ENCODE measurements at regions of chr17 and their contacts with region 1.

Region 1: DNA sequence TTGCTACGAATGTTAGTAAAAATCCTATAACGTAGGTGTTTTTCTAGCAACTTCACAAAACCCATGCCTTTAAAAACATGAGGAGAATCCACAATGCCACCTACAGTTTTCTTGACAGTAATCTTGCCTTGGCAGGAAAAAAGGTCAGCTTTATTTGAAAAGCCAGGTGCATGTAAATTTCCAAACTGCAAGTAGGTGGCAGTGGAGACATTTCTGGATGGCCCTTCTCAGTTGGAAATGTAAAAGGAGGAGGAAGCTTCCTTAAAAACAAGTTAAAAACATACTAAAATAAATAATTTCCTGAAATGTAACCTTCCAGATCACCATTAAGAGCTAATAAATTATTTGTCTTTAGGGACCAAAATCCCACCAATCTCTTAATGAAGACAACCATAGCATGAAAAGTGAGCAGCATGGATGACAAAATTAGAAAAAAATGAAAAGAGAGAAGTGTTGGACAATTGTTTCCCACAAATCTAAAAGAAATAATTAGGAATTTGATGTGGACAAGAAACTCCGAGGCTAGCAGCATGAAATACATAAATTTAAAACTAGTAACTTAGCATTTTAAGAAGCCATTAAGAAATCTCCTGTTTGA is 152.2 kb downstream of the SNX11 start:
- DNase-seq: peak; percentile 35 to 87
- ATAC-seq: peak; percentile 52 to 59; a peak in 4 of 6 replicates
- H3K4me3 ChIP-seq: no peak overlapping the region
- H3K27ac ChIP-seq: peak overlapping the region in 1 of 2 experiments; percentile 35; a peak in 1 of 6 replicates
- H3K4me1 ChIP-seq: peaks cover 61% of the 10 kb centered on the region
- CTCF ChIP-seq: peak; percentile 99
- EP300 ChIP-seq: no peak
- POLR2A ChIP-seq: no peak
- RAD21 ChIP-seq: peak; percentile 93

Region 2: DNA sequence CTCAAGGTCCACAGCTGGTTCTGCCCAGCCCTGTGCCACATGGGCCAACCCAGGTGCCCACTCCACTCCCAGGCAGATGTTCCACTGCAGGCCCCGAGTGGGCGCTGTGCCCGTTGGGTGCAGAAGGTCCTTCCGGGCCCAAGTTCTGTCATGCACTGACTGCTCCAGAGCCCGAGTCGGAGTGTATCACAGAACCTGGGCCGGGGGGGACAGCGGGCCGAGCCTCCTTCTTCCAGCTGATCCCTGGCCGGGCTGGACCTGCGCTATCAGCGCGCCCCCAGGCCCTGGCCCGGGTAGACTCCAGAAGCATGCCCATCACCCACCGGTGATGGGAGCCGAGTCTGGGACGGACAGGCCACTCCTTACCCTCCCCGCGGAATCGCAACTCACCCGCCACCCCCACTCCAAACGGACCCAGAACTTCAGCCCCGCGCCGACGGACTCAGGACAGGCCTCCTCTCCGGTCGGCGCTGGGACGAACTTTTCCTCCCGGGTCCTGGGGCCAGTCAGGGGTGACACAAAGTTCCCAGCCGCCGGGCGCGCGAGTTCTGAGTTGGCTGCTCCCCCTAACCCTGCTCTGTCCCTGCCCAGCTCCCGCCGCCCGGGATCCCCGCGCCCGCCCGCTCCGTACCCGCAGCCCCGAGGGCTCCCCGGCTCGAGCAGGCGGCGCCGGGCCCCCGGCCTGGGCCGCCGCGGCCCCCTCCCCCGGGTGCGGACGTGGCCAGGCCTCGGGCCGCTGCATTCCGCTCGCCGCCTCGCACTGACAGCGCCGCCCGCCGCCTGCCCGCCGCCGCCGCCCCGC is 222.6 kb before region 1 on chr17 and contains the start of gene COPZ2:
- CTCF ChIA-PET with region 1: no interaction called
- POLR2A ChIA-PET with region 1: no interaction called
- DNase-seq: peak; percentile 71 to 85
- ATAC-seq: peak; percentile 94 to 95
- H3K4me3 ChIP-seq: peak within 1 kb of the TSS; percentile 63
- H3K27ac ChIP-seq: peak within 1 kb of the TSS; percentile 74 to 91
- H3K4me1 ChIP-seq: 0 out of 3 replicates have a peak, but pooled peaks cover 3% of the 10 kb centered on the region
- CTCF ChIP-seq: peak; percentile 70
- EP300 ChIP-seq: no peak
- POLR2A ChIP-seq: peak; percentile 28
- RAD21 ChIP-seq: 0 out of 5 replicates have a peak, but pooled peaks have one; percentile 17 to 36
- polyA plus RNA-seq, gene COPZ2: 19.1 and 19.3 TPM in 2 replicates

Region 3: DNA sequence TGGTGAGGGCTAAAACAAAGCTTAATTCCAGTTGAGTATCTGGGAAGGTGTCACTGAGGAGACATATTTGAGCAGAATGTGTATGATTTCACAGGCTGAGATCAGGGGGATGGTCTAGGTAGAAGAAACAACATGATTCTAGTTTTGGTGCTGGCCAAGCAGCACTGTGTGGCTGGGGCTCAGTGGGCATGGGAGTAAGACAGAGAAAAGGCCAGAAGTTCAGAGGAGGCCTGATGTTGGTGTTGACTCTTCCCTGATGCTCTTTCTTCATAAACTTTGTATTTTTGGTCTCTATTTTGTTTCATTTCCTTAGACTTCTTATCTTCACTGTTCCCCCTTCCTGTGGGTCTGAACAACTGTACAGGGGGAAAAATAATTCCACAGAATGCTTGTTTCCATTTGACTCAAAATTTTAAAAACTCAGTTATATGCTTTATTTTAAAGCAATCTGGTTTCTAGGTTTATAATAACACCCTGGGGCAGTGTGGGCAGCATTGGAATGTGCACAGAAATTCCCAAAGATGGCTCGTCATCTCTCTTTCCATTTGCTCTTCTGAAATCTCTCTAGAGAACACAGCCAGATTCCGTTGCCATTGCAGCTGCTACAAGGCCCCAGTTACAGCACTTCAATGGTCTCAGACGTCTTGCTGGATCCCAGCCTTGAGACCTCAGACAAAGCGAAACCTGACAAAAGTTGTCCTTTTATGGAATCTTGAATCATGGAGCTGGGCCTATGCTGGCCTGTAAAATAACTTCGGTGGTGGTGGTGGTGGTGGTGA is 83.9 kb before region 1 on chr17:
- CTCF ChIA-PET with region 1: interaction called, 11 read pairs
- POLR2A ChIA-PET with region 1: no interaction called
- DNase-seq: no peak
- ATAC-seq: no peak
- H3K4me3 ChIP-seq: no peak overlapping the region
- H3K27ac ChIP-seq: no peak overlapping the region
- H3K4me1 ChIP-seq: peaks cover 5% of the 10 kb centered on the region; the same call in 1 of the 3 replicates
- CTCF ChIP-seq: no peak
- EP300 ChIP-seq: no peak
- POLR2A ChIP-seq: no peak
- RAD21 ChIP-seq: no peak

Region 4: DNA sequence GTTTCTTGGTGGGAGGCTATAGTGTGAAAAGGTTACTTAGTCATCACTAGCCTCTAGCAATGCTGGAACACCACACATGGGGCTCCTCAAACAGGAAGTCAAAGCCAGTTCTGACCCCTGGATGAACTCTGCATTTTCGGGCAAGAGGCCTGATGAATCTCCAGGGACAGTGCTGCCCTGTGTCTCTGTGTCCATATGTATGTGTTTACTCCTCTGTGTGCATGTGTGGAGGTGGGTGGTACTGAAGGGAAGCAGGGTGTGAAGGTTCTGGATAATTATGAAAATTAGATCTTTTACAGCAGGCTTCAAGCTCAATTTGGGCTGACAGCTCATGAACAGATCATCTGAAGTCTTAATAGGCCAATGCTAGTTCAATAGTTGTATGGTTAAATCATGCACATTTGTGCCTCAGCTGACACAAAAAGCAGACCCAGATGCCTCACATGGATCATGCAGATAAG is 18.6 kb before region 1 on chr17:
- CTCF ChIA-PET with region 1: interaction called, 217 read pairs
- POLR2A ChIA-PET with region 1: no interaction called
- DNase-seq: peak; percentile 74 to 90
- ATAC-seq: peak; percentile 50 to 73; a peak in 5 of 6 replicates
- H3K4me3 ChIP-seq: no peak overlapping the region
- H3K27ac ChIP-seq: peak overlapping the region; percentile 62 to 77
- H3K4me1 ChIP-seq: peaks cover 82% of the 10 kb centered on the region
- CTCF ChIP-seq: no peak
- EP300 ChIP-seq: peak in 1 of 2 experiments; percentile 41; a peak in 1 of 5 replicates
- POLR2A ChIP-seq: no peak
- RAD21 ChIP-seq: no peak

Region 5: DNA sequence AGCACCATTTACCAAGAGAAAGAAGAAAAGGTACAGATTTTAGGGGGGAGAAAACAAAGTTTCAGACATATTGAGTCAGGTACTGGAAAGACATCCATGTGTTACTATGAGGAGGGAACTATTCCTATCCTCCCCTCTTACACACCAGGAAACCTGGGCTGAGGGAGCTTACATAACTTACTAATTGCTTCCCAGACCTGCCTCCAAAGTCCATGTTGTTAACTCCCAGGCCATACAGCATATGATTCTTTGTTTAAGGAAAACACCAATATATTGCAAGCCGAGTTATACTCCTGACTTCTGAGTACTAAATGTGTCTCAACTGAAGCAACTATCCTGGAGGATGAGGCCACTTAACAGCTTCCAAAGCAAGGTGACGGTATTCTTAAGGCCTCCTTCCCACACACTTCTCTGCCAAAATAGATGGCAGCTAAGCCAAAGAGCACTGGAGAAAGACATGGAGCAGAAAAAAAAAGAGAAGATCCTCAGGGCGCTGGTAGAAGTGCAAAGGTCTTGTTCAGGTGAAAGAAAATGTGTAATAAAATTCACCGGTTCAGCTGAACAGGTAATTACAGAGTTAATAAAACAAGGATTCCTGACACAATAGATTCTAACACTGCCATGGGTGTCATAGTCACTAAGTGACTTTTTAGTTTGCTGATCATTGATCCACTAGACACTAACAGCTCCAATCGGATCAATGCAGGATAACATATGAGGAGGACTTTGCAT is 19.1 kb after region 1 on chr17:
- CTCF ChIA-PET with region 1: interaction called, 43 read pairs
- POLR2A ChIA-PET with region 1: no interaction called
- DNase-seq: no peak
- ATAC-seq: no peak
- H3K4me3 ChIP-seq: no peak overlapping the region
- H3K27ac ChIP-seq: no peak overlapping the region
- H3K4me1 ChIP-seq: peaks cover 6% of the 10 kb centered on the region; the same call in 1 of the 3 replicates
- CTCF ChIP-seq: no peak
- EP300 ChIP-seq: no peak
- POLR2A ChIP-seq: no peak
- RAD21 ChIP-seq: no peak

Region 6: DNA sequence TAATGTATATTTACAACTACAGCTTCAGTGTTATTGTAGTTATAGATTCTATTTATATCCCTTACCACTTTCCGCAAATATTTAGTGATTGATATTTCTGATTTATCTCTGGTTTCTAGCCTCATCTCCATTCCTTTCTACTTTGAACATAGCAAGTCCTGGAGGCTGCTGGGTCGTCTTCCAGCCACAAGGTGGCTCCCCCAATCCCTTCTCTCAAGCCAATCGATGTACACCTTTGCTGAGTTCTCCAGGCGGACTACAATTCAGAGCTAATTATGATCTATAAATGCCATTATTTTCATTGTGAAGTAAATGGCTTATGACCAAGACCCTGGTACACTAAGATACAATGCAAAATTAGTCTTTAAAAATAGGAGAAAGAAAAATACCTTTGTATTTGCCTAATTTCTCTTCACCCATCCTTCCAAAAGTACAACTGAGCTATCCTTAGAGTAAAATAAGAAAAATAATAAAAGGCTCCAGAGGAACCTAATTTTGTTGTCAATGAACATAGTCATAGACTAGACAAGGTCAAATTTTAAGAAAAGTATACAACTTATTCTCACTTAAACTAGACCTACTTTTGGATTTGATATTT is 48.1 kb after region 1 on chr17:
- CTCF ChIA-PET with region 1: interaction called, 44 read pairs
- POLR2A ChIA-PET with region 1: no interaction called
- DNase-seq: peak; percentile 58 to 78
- ATAC-seq: peak; percentile 96 to 98
- H3K4me3 ChIP-seq: no peak overlapping the region
- H3K27ac ChIP-seq: no peak overlapping the region
- H3K4me1 ChIP-seq: no peaks in the 10 kb centered on the region
- CTCF ChIP-seq: peak; percentile 89
- EP300 ChIP-seq: no peak
- POLR2A ChIP-seq: no peak
- RAD21 ChIP-seq: peak; percentile 69 to 76

Region 7: DNA sequence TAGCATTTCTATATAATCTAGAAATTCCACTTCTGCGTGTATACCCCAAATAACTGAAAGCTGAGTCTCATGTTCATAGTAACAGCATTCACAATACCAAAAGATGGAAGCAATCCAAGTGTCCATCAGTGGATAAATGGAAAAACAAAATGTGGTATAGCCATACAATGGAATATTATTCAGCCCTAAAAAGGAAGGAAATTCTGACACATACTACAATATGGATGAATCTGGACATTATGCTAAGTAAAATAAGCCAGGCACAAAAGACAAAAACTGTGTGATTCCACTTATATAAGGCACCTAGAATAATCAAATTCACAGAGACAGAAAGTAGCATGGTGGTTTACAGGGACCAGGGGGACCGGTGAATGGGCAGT is 250.6 kb after region 1 on chr17:
- CTCF ChIA-PET with region 1: no interaction called
- POLR2A ChIA-PET with region 1: no interaction called
- DNase-seq: no peak
- ATAC-seq: no peak
- H3K4me3 ChIP-seq: no peak overlapping the region
- H3K27ac ChIP-seq: no peak overlapping the region
- H3K4me1 ChIP-seq: peaks cover 15% of the 10 kb centered on the region
- CTCF ChIP-seq: no peak
- EP300 ChIP-seq: no peak
- POLR2A ChIP-seq: no peak
- RAD21 ChIP-seq: no peak

Region 8: GRCh38 chr17:48586355-48587258 is 326.8 kb after region 1 on chr17:
- CTCF ChIA-PET with region 1: interaction called, 17 read pairs
- POLR2A ChIA-PET with region 1: no interaction called
- DNase-seq: no peak
- ATAC-seq: no peak
- H3K4me3 ChIP-seq: no peak overlapping the region; the same call in 2 of the 3 replicates
- H3K27ac ChIP-seq: peak overlapping the region; percentile 71 to 86; a peak in 5 of 6 replicates
- H3K4me1 ChIP-seq: peaks cover 21% of the 10 kb centered on the region
- CTCF ChIP-seq: no peak
- EP300 ChIP-seq: no peak
- POLR2A ChIP-seq: no peak
- RAD21 ChIP-seq: no peak

Region 9: GRCh38 chr17:48610282-48611211 is 350.8 kb after region 1 on chr17 and contains the start of gene HOXB7:
- CTCF ChIA-PET with region 1: interaction called, 11 read pairs
- POLR2A ChIA-PET with region 1: no interaction called
- DNase-seq: peak; percentile 75 to 91
- ATAC-seq: peak; percentile 11 to 59; a peak in 3 of 6 replicates
- H3K4me3 ChIP-seq: peak within 1 kb of the TSS; percentile 74
- H3K27ac ChIP-seq: peak within 1 kb of the TSS; percentile 93 to 99
- H3K4me1 ChIP-seq: peaks cover 16% of the 10 kb centered on the region
- CTCF ChIP-seq: no peak
- EP300 ChIP-seq: no peak
- POLR2A ChIP-seq: peak; percentile 66
- RAD21 ChIP-seq: no peak
- polyA plus RNA-seq, gene HOXB7: 15.4 and 22.3 TPM in 2 replicates

Measured in A549 (cell line).